Activated T-helper 1 cell treated with anti-CD3 and anti-CD28 coated beads, Interleukin-12 subunit alpha, Interleukin-12 subunit beta, Interleukin-2, Interleukin-4 antibody, amounts not matched to agents 30 ng/mL and 10 ng/mL and 1 ng/mL, durations not matched to agents 14 hours and 24 hours and 36 hours (primary cell): ENCODE measurements at regions of chr1 and their contacts with region 1.

Region 1: GRCh38 chr1:156608036-156608674 is 6.9 kb upstream of the GPATCH4 start:
- DNase-seq: peak; percentile 49
- H3K4me3 Mint-ChIP-seq: no peak overlapping the region
- H3K27ac Mint-ChIP-seq: no peak overlapping the region
- H3K4me1 Mint-ChIP-seq: peaks cover 12% of the 10 kb centered on the region
- H3K27me3 Mint-ChIP-seq: peaks cover 14% of the 10 kb centered on the region

Region 2: DNA sequence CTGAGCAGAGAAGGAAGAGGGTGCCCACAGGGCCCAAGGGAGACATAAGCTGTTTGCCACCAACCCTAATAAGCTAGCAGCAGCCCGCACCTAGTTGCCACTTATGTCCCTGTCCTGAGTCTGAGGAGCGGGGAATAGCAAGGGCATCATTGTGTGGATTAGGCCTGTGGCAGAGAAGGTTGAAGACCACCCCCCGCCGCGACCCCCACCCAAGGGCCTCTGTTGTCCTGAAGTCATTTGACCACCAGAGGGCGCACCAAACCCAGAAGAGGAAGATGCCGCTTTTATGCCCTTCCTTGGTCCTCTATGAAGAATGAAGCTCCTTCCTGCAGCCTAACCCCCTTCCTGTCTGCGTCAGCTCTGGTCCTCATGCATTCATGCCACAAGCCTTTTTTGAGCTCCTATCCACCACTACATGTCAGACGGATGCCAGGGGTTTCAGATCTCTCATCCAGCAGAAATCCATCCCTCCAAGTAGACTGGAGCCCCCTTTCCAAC is 222.6 kb before region 1 on chr1:
- intact Hi-C with region 1: loop called (anchors 1 kb)
- DNase-seq: peak; percentile 59
- H3K4me3 Mint-ChIP-seq: no peak overlapping the region
- H3K27ac Mint-ChIP-seq: no peak overlapping the region
- H3K4me1 Mint-ChIP-seq: peaks cover 5% of the 10 kb centered on the region
- H3K27me3 Mint-ChIP-seq: peaks cover 34% of the 10 kb centered on the region

Region 3: DNA sequence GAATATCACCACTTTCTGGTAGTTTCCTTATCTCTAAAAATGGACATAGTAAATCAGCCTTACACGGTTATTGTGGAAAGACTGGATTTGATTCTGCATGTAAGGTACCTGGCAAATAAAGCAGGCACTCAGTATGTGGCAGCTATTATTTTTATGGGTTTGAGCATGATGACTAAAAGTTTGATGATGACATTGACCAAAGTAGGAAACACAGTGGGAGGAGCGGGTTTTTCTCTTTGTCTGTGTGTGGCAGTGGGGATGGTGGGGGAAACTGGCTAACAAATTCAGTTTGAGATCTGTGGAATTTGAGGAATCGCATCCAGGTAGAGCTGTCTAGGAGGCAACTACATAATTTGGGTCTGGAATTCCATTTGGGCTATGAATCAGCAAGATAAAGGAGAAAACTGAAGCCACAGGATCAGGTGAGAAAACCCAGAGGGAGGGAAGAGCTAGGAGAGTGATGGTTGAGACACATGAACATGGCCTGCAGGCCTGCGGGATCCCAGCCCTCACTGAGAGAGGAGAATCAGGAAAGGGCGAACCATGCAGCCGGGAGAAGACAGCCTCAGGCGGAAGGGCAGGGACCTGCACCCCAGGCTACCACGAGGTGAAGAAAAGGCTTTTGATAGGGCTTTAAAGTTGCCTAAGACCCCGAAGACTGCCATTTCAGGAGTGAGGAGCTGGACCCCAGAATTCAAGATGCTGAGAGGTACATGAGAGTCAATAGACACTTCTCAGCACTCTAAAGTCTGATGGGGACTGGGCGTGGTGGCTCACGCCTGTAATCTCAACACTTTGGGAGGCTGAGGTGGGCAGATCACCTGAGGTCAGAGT is 159.8 kb before region 1 on chr1:
- intact Hi-C with region 1: no loop called
- DNase-seq: no peak
- H3K4me3 Mint-ChIP-seq: no peak overlapping the region
- H3K27ac Mint-ChIP-seq: no peak overlapping the region
- H3K4me1 Mint-ChIP-seq: peaks cover 25% of the 10 kb centered on the region
- H3K27me3 Mint-ChIP-seq: peaks cover 42% of the 10 kb centered on the region

Region 4: GRCh38 chr1:156480411-156481192 is 127.6 kb before region 1 on chr1:
- intact Hi-C with region 1: loop called (anchors 1 kb)
- DNase-seq: peak; percentile 63
- H3K4me3 Mint-ChIP-seq: peak overlapping the region; percentile 17
- H3K27ac Mint-ChIP-seq: peak overlapping the region; percentile 78
- H3K4me1 Mint-ChIP-seq: peaks cover 53% of the 10 kb centered on the region
- H3K27me3 Mint-ChIP-seq: no peaks in the 10 kb centered on the region

Region 5: DNA sequence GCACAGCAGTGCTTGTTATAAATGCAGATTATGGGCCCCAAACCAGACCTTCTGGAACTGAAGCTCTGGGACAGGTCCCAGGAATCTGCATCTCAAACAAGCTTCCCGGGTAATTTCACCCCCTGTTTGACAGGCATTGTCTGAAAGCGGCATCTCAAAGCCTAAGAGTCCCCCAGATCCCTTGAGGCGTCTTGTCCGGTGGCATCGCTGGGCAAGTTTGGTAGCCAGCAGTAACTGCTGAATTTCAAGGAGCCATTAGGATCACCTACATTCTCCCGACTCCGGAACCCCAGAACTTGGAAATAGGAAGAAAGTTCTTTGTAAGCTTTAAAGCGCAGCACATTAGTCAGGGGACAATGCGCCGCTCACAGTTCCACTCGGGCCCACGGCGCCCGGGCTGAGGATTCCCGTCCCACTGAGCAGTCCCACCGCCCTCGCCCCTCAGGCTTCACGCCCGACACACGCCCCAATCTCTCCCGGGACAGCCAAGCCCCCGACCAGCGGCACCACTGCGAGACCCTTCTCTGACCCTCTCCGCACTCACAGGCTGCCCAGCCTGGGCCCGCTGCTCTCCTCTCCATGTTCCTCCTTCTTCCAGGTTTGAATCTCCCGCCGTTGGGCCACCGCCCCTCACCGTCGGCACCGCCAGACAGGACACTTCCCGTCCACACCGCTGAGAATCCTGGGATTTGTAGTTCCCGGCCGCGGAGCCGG is 36.0 kb before region 1 on chr1 and contains the start of gene IQGAP3:
- intact Hi-C with region 1: loop called (anchors 5 kb)
- DNase-seq: peak; percentile 74
- H3K4me3 Mint-ChIP-seq: peak within 1 kb of the TSS; percentile 96
- H3K27ac Mint-ChIP-seq: peak within 1 kb of the TSS; percentile 76
- H3K4me1 Mint-ChIP-seq: peaks cover 28% of the 10 kb centered on the region
- H3K27me3 Mint-ChIP-seq: peaks cover 18% of the 10 kb centered on the region
- total RNA-seq, gene IQGAP3: 10.3 and 11.2 TPM in 2 replicates

Region 6: GRCh38 chr1:156583821-156584622 is 24.1 kb before region 1 on chr1:
- intact Hi-C with region 1: loop called (anchors 1 kb)
- DNase-seq: peak; percentile 51
- H3K4me3 Mint-ChIP-seq: no peak overlapping the region
- H3K27ac Mint-ChIP-seq: no peak overlapping the region
- H3K4me1 Mint-ChIP-seq: peaks cover 12% of the 10 kb centered on the region
- H3K27me3 Mint-ChIP-seq: no peaks in the 10 kb centered on the region

Region 7: DNA sequence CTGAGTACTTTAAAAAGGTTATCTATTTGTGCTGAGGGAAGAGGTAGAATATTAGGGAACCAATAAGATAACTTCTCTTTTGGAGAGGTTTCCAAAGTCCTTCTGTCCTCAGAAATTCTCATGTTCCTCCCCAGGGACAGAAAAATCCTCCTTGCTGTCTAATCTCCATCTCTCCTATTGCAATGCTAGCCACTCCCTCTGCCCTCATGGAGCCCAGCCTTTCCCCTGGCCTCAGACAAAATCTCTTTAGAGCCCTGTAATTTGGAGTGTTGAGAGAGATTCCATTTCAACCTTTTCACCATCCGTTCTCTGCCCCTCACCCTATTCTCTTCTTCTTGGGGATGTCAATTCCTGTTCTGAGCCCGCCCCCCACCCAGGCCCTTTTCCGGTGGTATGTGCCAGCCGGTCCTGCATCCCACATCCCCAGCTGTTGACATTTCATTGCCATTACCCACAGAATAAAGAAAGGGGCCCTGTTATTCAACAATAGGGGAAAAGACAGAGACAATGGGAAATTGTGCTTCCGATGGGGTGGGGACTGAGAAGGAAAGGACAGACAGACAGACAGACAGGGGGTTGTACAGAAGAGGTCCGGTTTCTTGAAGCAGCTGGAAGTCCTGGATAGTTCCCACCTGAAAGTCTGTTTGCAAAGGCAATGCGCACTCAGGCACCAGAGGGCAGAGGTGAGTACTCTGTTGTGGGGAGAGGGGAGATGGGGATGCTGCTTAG is 10.9 kb after region 1 on chr1 and contains the start of gene HAPLN2:
- intact Hi-C with region 1: loop called (anchors 1 kb)
- DNase-seq: no peak
- H3K4me3 Mint-ChIP-seq: no peak within 1 kb of the TSS
- H3K27ac Mint-ChIP-seq: no peak within 1 kb of the TSS
- H3K4me1 Mint-ChIP-seq: no peaks in the 10 kb centered on the region
- H3K27me3 Mint-ChIP-seq: peaks cover 75% of the 10 kb centered on the region
- total RNA-seq, gene HAPLN2: not detected in 2 replicates

Region 8: DNA sequence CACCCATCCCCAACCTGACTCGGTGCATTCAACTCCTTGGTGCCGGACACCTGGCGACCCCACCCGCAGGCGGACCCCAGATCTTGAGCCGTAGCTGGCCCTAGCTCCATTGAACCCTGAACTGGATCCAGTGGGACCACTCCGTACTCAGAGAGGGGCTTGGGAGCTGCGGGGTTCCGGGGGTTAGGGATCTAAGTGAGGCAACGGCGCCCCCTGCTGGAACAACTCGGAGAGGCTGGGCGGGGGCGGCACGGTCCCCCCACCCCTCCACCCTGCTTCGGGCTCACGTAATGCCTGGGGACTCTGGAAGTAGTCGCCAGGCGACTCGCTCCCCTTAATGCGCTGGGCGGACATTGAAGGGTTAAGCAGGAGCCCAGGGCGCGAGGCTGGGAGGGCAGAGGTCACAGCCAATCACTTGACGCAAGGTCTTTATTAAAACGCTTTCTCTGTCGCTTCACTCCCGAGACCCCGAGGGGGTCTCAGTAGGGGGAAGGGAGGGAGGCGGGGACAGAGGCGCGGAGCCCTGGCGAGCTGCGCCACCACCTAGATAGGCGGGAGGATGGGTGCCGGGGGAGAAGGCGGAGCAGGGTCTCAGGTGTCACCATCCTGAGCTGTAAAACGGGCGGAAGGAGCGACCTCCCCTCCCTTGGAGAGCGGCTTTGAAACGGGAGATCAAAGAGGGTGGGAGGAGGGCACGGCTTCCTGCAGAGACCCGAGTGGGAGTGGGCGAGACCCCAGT is 97.9 kb after region 1 on chr1:
- intact Hi-C with region 1: no loop called
- DNase-seq: peak; percentile 47
- H3K4me3 Mint-ChIP-seq: peak overlapping the region; percentile 85
- H3K27ac Mint-ChIP-seq: peak overlapping the region; percentile 29
- H3K4me1 Mint-ChIP-seq: peaks cover 24% of the 10 kb centered on the region
- H3K27me3 Mint-ChIP-seq: peaks cover 43% of the 10 kb centered on the region